Endothelial cell of umbilical vein (primary cell): ENCODE measurements at regions of chr18 and their contacts with region 1.

Region 1: GRCh38 chr18:3771121-3771971 is 321.4 kb downstream of the TGIF1 start:
- DNase-seq: peak; percentile 93
- H3K4me3 ChIP-seq: peak overlapping the region in 2 of 3 experiments; percentile 35 to 53
- H3K27ac ChIP-seq: peak overlapping the region; percentile 37
- H3K4me1 ChIP-seq: peaks cover 40% of the 10 kb centered on the region
- H3K27me3 ChIP-seq: no peaks in the 10 kb centered on the region
- CTCF ChIP-seq: peak; percentile 93 to 94
- POLR2A ChIP-seq: no peak

Region 2: DNA sequence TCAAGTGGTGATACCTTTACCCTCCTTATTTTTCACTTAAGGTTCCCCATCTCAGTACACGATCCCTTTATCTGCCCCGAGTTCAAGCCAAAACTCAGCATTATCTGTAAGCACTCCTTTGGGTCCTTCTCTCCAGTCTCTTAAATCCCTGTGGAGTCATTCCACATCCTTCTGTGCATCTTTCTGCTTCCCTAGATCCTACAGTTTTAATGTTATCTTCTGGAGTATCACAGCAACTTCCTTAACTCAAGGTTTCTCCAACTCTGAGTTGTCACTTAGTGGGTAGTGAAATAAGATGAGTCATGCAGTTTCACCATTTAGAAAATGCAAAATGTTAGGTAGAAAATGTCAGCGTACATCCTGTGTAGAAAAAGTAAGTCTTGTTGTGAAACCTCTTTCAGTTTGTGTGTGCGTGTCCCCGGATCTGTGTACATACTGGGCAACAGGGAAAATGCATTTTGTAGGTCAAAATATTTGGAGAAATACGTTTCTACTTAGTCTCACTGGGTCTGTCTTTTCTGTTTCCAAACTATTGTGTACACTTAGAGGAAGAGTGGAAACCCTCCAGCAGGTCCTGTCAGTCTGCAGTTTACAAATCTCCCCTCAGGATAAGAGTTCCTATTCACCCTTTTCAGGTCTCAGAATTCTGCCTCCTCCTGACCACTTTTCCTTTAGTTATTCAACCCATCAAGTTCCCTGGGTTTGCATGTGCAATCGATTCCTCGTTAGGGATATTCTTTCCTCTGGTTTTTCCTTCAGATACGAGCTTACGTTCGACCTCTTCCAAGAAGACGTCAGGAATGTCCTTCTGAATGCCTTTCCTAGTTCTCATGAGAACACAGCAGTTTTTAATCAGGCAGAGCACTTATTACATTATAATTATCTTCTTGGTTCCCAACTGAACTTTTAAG is 166.6 kb before region 1 on chr18:
- CTCF ChIA-PET with region 1: interaction called, 3 read pairs
- POLR2A ChIA-PET with region 1: no interaction called
- dilution Hi-C with region 1: no loop called
- intact Hi-C with region 1: loop called (anchors 2 kb)
- DNase-seq: peak; percentile 90
- H3K4me3 ChIP-seq: peak overlapping the region; percentile 41 to 95 (median 83)
- H3K27ac ChIP-seq: peak overlapping the region; percentile 96
- H3K4me1 ChIP-seq: peaks cover 43% of the 10 kb centered on the region
- H3K27me3 ChIP-seq: no peaks in the 10 kb centered on the region
- CTCF ChIP-seq: no peak
- POLR2A ChIP-seq: peak; percentile 32

Region 3: GRCh38 chr18:3722320-3723000 is 48.9 kb before region 1 on chr18:
- CTCF ChIA-PET with region 1: interaction called, 12 read pairs
- POLR2A ChIA-PET with region 1: no interaction called
- dilution Hi-C with region 1: no loop called
- intact Hi-C with region 1: no loop called
- DNase-seq: no peak
- H3K4me3 ChIP-seq: no peak overlapping the region
- H3K27ac ChIP-seq: no peak overlapping the region
- H3K4me1 ChIP-seq: peaks cover 6% of the 10 kb centered on the region
- H3K27me3 ChIP-seq: no peaks in the 10 kb centered on the region
- CTCF ChIP-seq: no peak
- POLR2A ChIP-seq: no peak

Region 4: GRCh38 chr18:3782901-3783300 is 11.6 kb after region 1 on chr18:
- CTCF ChIA-PET with region 1: interaction called, 21 read pairs
- POLR2A ChIA-PET with region 1: no interaction called
- dilution Hi-C with region 1: no loop called
- intact Hi-C with region 1: no loop called
- DNase-seq: no peak
- H3K4me3 ChIP-seq: no peak overlapping the region
- H3K27ac ChIP-seq: no peak overlapping the region
- H3K4me1 ChIP-seq: no peaks in the 10 kb centered on the region
- H3K27me3 ChIP-seq: no peaks in the 10 kb centered on the region
- CTCF ChIP-seq: no peak
- POLR2A ChIP-seq: no peak

Region 5: DNA sequence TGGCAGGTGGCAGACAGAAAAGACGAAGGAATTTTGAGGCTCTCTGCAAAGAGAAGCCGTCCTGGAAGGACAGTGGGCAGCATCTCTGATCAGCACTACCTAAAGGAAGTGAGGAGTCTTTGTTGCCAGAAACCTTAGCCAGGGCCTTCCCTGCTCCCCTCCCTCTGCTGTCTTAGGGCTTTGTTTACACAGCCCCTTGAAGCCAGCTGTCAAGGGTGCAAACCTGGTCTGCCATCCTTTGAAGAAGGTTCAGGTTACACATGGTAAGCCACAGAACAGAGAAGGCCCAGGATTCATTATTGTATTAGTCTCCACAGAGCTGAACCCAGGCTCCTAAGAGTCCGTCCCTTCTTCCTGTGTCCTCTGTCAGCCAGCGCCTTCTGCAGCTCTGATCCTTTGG is 35.3 kb after region 1 on chr18:
- CTCF ChIA-PET with region 1: interaction called, 14 read pairs
- POLR2A ChIA-PET with region 1: no interaction called
- dilution Hi-C with region 1: no loop called
- intact Hi-C with region 1: no loop called
- DNase-seq: no peak
- H3K4me3 ChIP-seq: no peak overlapping the region
- H3K27ac ChIP-seq: no peak overlapping the region
- H3K4me1 ChIP-seq: no peaks in the 10 kb centered on the region
- H3K27me3 ChIP-seq: peaks cover 0 to 3% of the 10 kb centered on the region in 2 experiments
- CTCF ChIP-seq: no peak
- POLR2A ChIP-seq: no peak

Region 6: DNA sequence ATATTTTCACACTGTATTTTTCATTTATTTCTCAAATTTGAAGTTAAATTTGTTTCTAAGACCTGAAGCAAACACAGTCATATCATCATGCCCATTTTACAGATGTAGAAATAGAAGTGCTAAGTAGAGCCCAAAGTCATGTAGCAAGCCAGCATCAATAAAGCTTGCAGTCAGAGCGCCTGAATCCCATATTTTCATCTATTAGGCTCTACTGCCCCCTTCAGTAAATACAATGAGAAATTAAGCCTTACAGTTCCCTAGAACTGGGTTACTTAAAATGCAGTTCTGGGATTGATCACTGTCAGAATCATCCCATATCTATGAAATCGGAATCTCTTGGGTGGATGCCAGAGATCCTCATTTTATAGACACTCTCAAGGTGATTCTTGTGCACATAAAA is 98.5 kb after region 1 on chr18:
- CTCF ChIA-PET with region 1: interaction called, 256 read pairs
- POLR2A ChIA-PET with region 1: interaction called, 3 read pairs
- dilution Hi-C with region 1: no loop called
- intact Hi-C with region 1: loop called (anchors 1 kb)
- DNase-seq: peak; percentile 68
- H3K4me3 ChIP-seq: no peak overlapping the region
- H3K27ac ChIP-seq: no peak overlapping the region
- H3K4me1 ChIP-seq: no peaks in the 10 kb centered on the region
- H3K27me3 ChIP-seq: peaks cover 0 to 14% of the 10 kb centered on the region in 2 experiments
- CTCF ChIP-seq: peak; percentile 28 to 39
- POLR2A ChIP-seq: no peak